Activated naive CD8-positive, alpha-beta T cell treated with anti-CD3 and anti-CD28 coated beads, Interleukin-2, amount 10 ng/mL, durations not matched to agents 7 days and 5 days (primary cell): ENCODE measurements at regions of chr6 and their contacts with region 1.

Region 1: GRCh38 chr6:105992315-105992961 is 93.7 kb upstream of the PRDM1 start:
- DNase-seq: peak; percentile 95
- ATAC-seq: peak; percentile 93
- H3K4me3 Mint-ChIP-seq: peak overlapping the region; percentile 84
- H3K27ac Mint-ChIP-seq: peak overlapping the region; percentile 79
- H3K4me1 Mint-ChIP-seq: peaks cover 29% of the 10 kb centered on the region
- H3K27me3 Mint-ChIP-seq: peaks cover 76% of the 10 kb centered on the region

Region 2: DNA sequence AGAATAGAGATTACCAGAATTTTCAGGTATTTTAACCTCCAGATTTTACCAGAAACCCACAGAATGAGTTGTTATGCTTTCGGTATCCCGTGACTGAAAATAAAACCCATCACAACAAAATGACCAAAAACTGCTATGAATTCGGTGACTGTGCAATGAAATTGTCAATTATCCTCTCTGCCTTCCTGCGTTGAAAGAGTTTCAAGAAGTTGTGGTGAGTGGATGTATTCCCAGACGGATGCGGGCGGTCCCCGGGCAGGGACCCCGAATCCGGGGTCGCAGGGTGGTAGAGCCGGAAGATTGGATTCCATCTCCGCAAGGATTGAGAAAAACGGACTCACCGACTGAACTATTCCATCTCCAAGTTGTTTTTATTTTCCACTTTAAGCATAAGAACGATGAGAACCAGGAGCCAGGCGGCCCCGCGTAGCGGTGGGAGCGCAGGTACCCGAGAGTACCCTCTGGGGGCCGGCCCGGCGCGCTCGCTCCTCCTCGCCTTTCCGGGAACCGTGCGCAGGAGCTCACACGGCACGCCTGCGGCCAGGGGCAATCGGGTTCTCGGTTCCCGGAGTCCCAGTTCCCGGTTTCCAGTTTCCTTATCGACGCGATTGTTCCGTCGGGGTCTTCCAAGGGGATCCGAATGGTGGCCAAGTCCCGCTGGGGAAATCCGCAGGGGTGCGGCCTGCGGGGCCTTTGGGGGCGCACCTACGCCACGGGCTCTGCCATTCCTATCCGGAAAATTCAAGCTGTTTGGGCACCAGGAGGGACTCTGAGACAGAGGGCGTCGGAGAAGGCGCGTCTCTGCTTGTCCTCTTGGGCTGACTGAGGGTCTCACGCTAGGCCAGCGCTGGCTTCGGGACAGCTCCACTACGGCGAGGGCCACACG is 11.2 kb before region 1 on chr6:
- POLR2A ChIA-PET with region 1: interaction called, 44 read pairs
- DNase-seq: peak; percentile 60
- ATAC-seq: peak; percentile 43
- H3K4me3 Mint-ChIP-seq: peak overlapping the region; percentile 74
- H3K27ac Mint-ChIP-seq: peak overlapping the region; percentile 73
- H3K4me1 Mint-ChIP-seq: peaks cover 37% of the 10 kb centered on the region
- H3K27me3 Mint-ChIP-seq: peaks cover 45% of the 10 kb centered on the region

Region 3: DNA sequence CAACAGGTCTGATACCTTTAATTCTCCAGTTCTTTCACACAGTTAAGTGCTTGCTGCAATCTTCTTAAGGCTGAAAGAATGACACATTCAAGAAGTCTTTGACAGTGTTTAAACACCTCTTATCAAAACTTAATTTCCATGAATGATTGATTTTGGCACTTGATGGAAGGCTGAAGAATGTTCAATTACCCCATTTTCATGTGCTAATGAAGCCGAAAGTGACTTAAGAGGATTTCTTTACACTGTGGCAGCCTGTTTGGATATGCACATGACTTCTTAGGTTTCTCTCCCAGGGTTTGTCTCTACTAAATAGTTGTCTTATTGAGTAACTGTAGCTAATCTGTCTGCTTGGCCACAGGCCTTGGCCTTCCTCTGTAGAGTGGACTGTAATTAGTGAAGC is 12.6 kb after region 1 on chr6:
- POLR2A ChIA-PET with region 1: no interaction called
- DNase-seq: no peak
- ATAC-seq: no peak
- H3K4me3 Mint-ChIP-seq: no peak overlapping the region
- H3K27ac Mint-ChIP-seq: no peak overlapping the region
- H3K4me1 Mint-ChIP-seq: no peaks in the 10 kb centered on the region
- H3K27me3 Mint-ChIP-seq: peaks cover 70% of the 10 kb centered on the region

Region 4: GRCh38 chr6:106085984-106086813 is 93.8 kb after region 1 on chr6 and contains the start of gene PRDM1:
- POLR2A ChIA-PET with region 1: interaction called, 12 read pairs
- DNase-seq: peak; percentile 82
- ATAC-seq: peak; percentile 92
- H3K4me3 Mint-ChIP-seq: peak within 1 kb of the TSS; percentile 90
- H3K27ac Mint-ChIP-seq: peak within 1 kb of the TSS; percentile 75
- H3K4me1 Mint-ChIP-seq: peaks cover 58% of the 10 kb centered on the region
- H3K27me3 Mint-ChIP-seq: peaks cover 41% of the 10 kb centered on the region
- total RNA-seq, gene PRDM1: 20.2 to 21.1 TPM